IMR-90 (cell line): ENCODE measurements at regions of chr5 and their contacts with region 1.

Region 1: DNA sequence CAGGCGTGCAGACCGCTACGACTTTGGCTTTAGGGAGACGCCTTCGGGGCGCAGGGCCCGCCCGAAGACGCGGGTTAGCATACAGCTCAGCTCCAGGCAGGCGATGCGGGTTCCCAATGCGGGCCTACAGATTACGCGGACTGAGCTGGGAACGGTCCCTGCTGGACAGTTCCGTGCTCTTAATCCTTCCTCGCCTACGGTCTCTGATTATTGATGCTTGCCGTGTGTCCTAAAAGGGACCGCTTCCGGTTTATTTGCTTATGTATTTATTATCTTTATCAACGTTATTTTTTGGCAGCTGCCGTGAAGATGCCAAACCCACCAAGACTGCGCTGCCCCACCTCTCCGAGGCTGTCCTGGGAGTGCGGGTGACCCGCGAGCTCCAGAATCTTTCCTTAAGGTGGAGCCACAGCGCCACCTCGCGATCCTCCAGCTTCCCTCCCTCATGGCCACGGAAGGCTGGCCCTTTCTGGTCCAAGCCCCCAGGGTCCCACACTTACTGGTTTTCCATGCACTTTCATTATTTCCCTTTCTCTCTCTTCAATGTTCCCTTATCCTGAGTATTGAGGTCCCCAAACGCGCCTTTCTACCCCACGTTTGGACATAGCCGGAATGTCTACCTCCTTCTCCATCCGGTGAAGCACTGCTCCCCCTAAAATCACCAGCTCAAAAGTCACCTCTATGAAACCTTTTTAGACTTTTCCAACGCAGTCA is 7.0 kb upstream of the EBF1 start:
- DNase-seq: peak; percentile 52
- ATAC-seq: peak; percentile 95
- H3K4me3 ChIP-seq: no peak overlapping the region
- H3K27ac ChIP-seq: no peak overlapping the region
- H3K4me1 ChIP-seq: no peaks in the 10 kb centered on the region
- H3K27me3 ChIP-seq: peaks cover 49% of the 10 kb centered on the region
- CTCF ChIP-seq: peak; percentile 90
- POLR2A ChIP-seq: peak; percentile 53
- RAD21 ChIP-seq: peak; percentile 94

Region 2: DNA sequence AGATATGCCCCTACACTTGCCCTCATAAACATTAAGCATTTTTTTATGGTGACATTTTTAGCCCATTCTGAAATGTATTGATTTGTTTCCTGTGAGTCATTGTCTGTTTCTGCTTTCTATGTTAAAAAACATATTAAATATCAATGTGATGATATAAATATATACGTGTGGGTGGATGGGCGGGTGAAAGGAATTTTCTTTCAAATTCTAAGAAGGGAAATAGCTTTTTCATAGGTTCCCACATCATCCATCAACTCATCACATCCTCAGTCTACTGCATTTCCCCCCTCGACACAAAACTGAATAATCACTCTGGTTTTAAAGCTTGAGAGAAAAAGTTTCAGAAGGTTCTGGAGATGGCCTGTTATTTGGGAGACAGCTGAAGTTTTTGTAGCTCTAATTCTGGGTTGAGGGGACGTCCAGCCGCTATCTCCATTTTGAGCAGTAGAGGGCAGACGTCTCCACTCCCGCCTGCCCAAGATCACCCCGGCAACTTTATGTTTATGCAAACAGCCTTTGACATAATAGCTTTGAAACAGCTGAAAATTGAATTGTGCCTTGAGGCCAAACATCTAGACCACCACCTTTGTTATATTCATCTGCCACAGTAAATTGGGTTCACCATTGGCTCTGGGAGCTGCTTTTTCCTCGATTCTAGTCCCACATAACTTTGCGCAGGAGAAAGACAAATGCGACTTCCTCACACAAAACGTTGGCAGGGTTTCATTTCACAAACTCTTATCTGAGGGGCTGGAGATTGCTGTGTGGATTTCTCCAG is 1031.5 kb before region 1 on chr5:
- CTCF ChIA-PET with region 1: interaction called, 15 read pairs
- POLR2A ChIA-PET with region 1: no interaction called
- dilution Hi-C with region 1: no loop called
- in situ Hi-C with region 1: loop called (anchors 10 kb)
- intact Hi-C with region 1: loop called (anchors 1 kb)
- DNase-seq: peak; percentile 61
- ATAC-seq: peak; percentile 98
- H3K4me3 ChIP-seq: peak overlapping the region; percentile 20; the same call in 1 of the 2 replicates
- H3K27ac ChIP-seq: no peak overlapping the region
- H3K4me1 ChIP-seq: no peaks in the 10 kb centered on the region
- H3K27me3 ChIP-seq: no peaks in the 10 kb centered on the region
- CTCF ChIP-seq: peak; percentile 75
- POLR2A ChIP-seq: no peak
- RAD21 ChIP-seq: peak; percentile 59

Region 3: GRCh38 chr5:158695595-158696330 is 411.0 kb before region 1 on chr5:
- CTCF ChIA-PET with region 1: interaction called, 90 read pairs
- POLR2A ChIA-PET with region 1: interaction called, 3 read pairs
- dilution Hi-C with region 1: no loop called
- in situ Hi-C with region 1: loop called (anchors 5 kb)
- intact Hi-C with region 1: loop called (anchors 1 kb)
- DNase-seq: peak; percentile 60
- ATAC-seq: peak; percentile 95
- H3K4me3 ChIP-seq: no peak overlapping the region
- H3K27ac ChIP-seq: no peak overlapping the region
- H3K4me1 ChIP-seq: no peaks in the 10 kb centered on the region
- H3K27me3 ChIP-seq: peaks cover 2% of the 10 kb centered on the region; the same call in 1 of the 2 replicates
- CTCF ChIP-seq: peak; percentile 90
- POLR2A ChIP-seq: no peak
- RAD21 ChIP-seq: peak; percentile 89

Region 4: GRCh38 chr5:159120446-159120845 is 13.7 kb after region 1 on chr5:
- CTCF ChIA-PET with region 1: interaction called, 10 read pairs
- POLR2A ChIA-PET with region 1: no interaction called
- dilution Hi-C with region 1: no loop called
- in situ Hi-C with region 1: no loop called
- intact Hi-C with region 1: no loop called
- DNase-seq: no peak
- ATAC-seq: no peak; the same call in 1 of the 2 replicates
- H3K4me3 ChIP-seq: peak overlapping the region; percentile 22; the same call in 1 of the 2 replicates
- H3K27ac ChIP-seq: no peak overlapping the region
- H3K4me1 ChIP-seq: no peaks in the 10 kb centered on the region
- H3K27me3 ChIP-seq: no peaks in the 10 kb centered on the region; the same call in 1 of the 2 replicates
- CTCF ChIP-seq: no peak
- POLR2A ChIP-seq: no peak
- RAD21 ChIP-seq: no peak

Region 5: DNA sequence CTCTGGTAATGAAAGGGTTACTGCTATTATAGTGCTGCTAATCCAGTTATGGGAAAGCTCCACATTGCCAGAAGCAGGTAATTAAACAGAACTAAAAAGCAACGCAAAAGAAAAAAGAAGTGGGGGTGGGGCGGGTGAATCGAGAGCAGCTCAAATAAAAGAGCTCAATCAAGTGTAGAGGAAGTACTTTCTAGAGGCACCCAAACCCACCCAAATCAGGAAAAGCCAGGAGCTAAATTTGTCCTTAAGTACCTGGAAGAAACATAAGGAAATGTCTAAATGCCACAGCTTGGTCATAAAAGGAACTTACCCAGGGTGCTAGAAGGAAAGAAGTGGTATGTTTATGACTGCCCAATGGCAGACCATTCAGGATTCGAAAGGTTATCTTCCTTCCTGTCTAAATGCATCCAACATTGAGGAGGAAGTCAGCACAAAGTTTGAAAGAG is 105.0 kb after region 1 on chr5:
- CTCF ChIA-PET with region 1: no interaction called
- POLR2A ChIA-PET with region 1: no interaction called
- dilution Hi-C with region 1: no loop called
- in situ Hi-C with region 1: no loop called
- intact Hi-C with region 1: no loop called
- DNase-seq: no peak
- ATAC-seq: no peak
- H3K4me3 ChIP-seq: no peak overlapping the region
- H3K27ac ChIP-seq: no peak overlapping the region
- H3K4me1 ChIP-seq: 0 out of 2 replicates have a peak, but pooled peaks cover 2% of the 10 kb centered on the region
- H3K27me3 ChIP-seq: no peaks in the 10 kb centered on the region
- CTCF ChIP-seq: no peak
- POLR2A ChIP-seq: no peak
- RAD21 ChIP-seq: no peak